Upper lobe of right lung (tissue), 1 donor: ENCODE measurements at regions of chr12 and their contacts with region 1.

Region 1: GRCh38 chr12:98424726-98425401 is 90.5 kb upstream of the TMPO start:
- DNase-seq: no peak
- ATAC-seq: peak; percentile 87
- H3K4me3 ChIP-seq: no peak overlapping the region
- H3K27ac ChIP-seq: no peak overlapping the region
- H3K4me1 ChIP-seq: peaks cover 13% of the 10 kb centered on the region
- H3K27me3 ChIP-seq: no peaks in the 10 kb centered on the region
- CTCF ChIP-seq: peak; percentile 72

Region 2: GRCh38 chr12:98388126-98388525 is 36.7 kb before region 1 on chr12:
- intact Hi-C with region 1: no loop called
- DNase-seq: no peak
- ATAC-seq: no peak
- H3K4me3 ChIP-seq: no peak overlapping the region
- H3K27ac ChIP-seq: no peak overlapping the region
- H3K4me1 ChIP-seq: no peaks in the 10 kb centered on the region
- H3K27me3 ChIP-seq: peaks cover 8% of the 10 kb centered on the region
- CTCF ChIP-seq: no peak

Region 3: GRCh38 chr12:98516184-98516873 is 91.5 kb after region 1 on chr12:
- intact Hi-C with region 1: loop called (anchors 10 kb)
- DNase-seq: peak; percentile 79
- ATAC-seq: peak; percentile 72
- H3K4me3 ChIP-seq: peak overlapping the region; percentile 96
- H3K27ac ChIP-seq: peak overlapping the region; percentile 92
- H3K4me1 ChIP-seq: peaks cover 26% of the 10 kb centered on the region
- H3K27me3 ChIP-seq: no peaks in the 10 kb centered on the region
- CTCF ChIP-seq: peak; percentile 74

Region 4: GRCh38 chr12:98532681-98533304 is 107.9 kb after region 1 on chr12:
- intact Hi-C with region 1: no loop called
- DNase-seq: no peak
- ATAC-seq: peak; percentile 79
- H3K4me3 ChIP-seq: no peak overlapping the region
- H3K27ac ChIP-seq: no peak overlapping the region
- H3K4me1 ChIP-seq: no peaks in the 10 kb centered on the region
- H3K27me3 ChIP-seq: no peaks in the 10 kb centered on the region
- CTCF ChIP-seq: peak; percentile 67

Region 5: GRCh38 chr12:99009654-99010296 is 584.9 kb after region 1 on chr12:
- intact Hi-C with region 1: no loop called
- DNase-seq: no peak
- ATAC-seq: no peak
- H3K4me3 ChIP-seq: no peak overlapping the region
- H3K27ac ChIP-seq: no peak overlapping the region
- H3K4me1 ChIP-seq: no peaks in the 10 kb centered on the region
- H3K27me3 ChIP-seq: no peaks in the 10 kb centered on the region
- CTCF ChIP-seq: no peak